Caco-2 (cell line): ENCODE measurements at regions of chr19 and their contacts with region 1.

Region 1: GRCh38 chr19:8526345-8527067 is 12.5 kb upstream of the ZNF414 start:
- DNase-seq: peak; percentile 94
- H3K4me3 ChIP-seq: peak overlapping the region; percentile 86
- H3K4me3 Mint-ChIP-seq: no peak overlapping the region
- H3K27ac Mint-ChIP-seq: no peak overlapping the region
- H3K4me1 ChIP-seq: peaks cover 2% of the 10 kb centered on the region; the same call in 1 of the 2 replicates
- H3K4me1 Mint-ChIP-seq: peaks cover 7% of the 10 kb centered on the region
- H3K27me3 ChIP-seq: no peaks in the 10 kb centered on the region
- H3K27me3 Mint-ChIP-seq: no peaks in the 10 kb centered on the region
- CTCF ChIP-seq: no peak

Region 2: DNA sequence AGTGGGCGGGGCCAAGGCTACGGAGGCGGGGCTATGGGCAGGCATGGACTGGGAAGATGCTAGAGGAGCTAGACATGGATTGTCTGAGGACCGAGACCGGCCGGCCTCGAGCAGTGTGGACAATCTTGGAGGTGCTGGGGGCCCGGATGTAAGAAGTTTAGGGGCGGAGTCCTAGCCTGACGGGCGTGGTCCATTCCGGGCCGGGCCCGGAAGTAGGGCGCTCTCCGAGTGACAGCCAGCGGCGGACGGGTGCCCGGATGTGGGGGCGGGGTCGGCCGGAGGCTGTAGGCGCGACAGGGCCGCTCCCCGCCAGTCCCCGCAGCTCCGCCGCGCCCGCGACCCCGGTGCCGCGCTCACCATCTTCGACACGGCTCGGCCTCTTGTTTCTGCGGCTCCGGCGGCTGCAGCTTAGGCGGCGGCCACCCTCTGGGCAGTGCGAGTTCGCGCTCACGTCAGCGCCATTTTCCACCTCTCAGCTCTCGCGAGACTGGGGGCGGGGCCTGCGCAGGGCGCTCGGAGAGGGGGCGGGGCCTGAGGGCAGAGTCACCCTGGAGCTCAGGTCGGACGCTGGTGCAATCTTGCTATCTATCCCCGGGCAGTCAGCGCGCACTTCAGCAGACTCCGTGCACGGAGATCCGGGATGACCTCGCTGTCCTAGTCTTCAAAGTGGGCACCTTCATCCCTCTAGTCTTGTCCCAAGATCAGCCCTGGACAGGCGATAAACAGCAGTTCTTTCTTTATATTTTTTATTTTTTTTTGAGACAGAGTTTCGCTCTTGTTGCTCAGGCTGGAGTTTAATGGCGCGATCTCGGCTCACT is 12.6 kb before region 1 on chr19 and contains the start of gene ZNF414:
- CTCF ChIA-PET with region 1: interaction called, 14 read pairs
- POLR2A ChIA-PET with region 1: interaction called, 55 read pairs
- intact Hi-C with region 1: loop called (anchors 1 kb)
- DNase-seq: peak; percentile 96 to 98
- H3K4me3 ChIP-seq: peak within 1 kb of the TSS; percentile 86
- H3K4me3 Mint-ChIP-seq: peak within 1 kb of the TSS; percentile 76
- H3K27ac Mint-ChIP-seq: peak within 1 kb of the TSS; percentile 91
- H3K4me1 ChIP-seq: peaks cover 12% of the 10 kb centered on the region; the same call in 1 of the 2 replicates
- H3K4me1 Mint-ChIP-seq: no peaks in the 10 kb centered on the region
- H3K27me3 ChIP-seq: no peaks in the 10 kb centered on the region
- H3K27me3 Mint-ChIP-seq: no peaks in the 10 kb centered on the region
- CTCF ChIP-seq: no peak
- total RNA-seq, gene ZNF414: 17.2 and 25.0 TPM in 2 replicates

Region 3: GRCh38 chr19:8580710-8581281 is 54.3 kb after region 1 on chr19:
- CTCF ChIA-PET with region 1: interaction called, 10 read pairs
- POLR2A ChIA-PET with region 1: no interaction called
- intact Hi-C with region 1: no loop called
- DNase-seq: peak; percentile 76 to 84
- H3K4me3 ChIP-seq: no peak overlapping the region
- H3K4me3 Mint-ChIP-seq: no peak overlapping the region
- H3K27ac Mint-ChIP-seq: no peak overlapping the region
- H3K4me1 ChIP-seq: no peaks in the 10 kb centered on the region
- H3K4me1 Mint-ChIP-seq: peaks cover 6% of the 10 kb centered on the region
- H3K27me3 ChIP-seq: no peaks in the 10 kb centered on the region
- H3K27me3 Mint-ChIP-seq: peaks cover 9% of the 10 kb centered on the region
- CTCF ChIP-seq: peak; percentile 98

Region 4: GRCh38 chr19:8609279-8610040 is 83.0 kb after region 1 on chr19:
- CTCF ChIA-PET with region 1: no interaction called
- POLR2A ChIA-PET with region 1: no interaction called
- intact Hi-C with region 1: no loop called
- DNase-seq: no peak
- H3K4me3 ChIP-seq: no peak overlapping the region
- H3K4me3 Mint-ChIP-seq: peak overlapping the region; percentile 60
- H3K27ac Mint-ChIP-seq: peak overlapping the region; percentile 47
- H3K4me1 ChIP-seq: no peaks in the 10 kb centered on the region
- H3K4me1 Mint-ChIP-seq: no peaks in the 10 kb centered on the region
- H3K27me3 ChIP-seq: no peaks in the 10 kb centered on the region
- H3K27me3 Mint-ChIP-seq: no peaks in the 10 kb centered on the region
- CTCF ChIP-seq: no peak

Region 5: DNA sequence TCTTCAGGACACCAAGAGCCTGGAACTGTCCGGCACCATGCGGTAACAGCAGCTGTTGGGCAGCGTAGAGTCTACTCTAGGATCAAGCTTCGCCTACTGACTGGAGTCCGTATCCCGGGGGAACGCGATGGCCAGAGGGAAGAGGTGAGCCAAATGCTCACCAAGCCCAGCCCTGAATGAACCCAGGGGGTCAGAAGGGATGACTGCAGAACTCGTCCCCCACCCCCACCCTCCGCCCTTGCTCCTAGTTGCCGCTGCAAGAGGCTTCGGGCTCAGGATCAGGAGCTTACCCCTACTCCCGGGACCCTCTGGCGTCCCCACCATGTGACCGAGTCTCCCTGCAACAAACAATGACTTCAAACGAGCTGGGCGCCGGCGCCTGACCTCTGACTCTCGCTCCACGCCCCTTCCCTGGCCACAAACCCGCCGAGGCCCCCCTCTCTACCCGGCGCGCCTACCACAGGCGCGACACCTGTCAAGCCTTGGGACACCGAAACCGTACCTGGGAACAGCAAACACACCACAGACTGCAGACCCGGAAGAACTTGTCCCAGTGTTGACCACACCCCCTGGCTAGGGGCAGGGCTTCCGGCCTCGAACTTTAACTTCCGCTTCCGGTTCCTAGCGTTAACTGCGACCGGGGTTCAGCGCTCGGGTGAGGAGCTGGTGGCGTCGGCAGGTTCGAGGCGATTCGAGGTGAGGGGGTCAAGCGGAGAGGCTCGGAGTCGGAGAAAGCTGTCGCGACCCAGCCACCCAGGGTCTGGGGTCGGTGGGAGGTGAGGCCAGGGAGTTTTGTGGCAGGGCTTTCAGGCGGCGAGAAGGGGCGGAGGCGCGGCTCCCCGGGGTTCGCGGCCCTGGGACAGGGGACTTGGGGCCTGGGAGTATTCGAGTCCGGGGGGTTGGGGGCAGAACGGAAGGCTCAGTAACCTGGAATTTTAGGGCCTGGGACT is 1301.1 kb after region 1 on chr19 and contains the start of gene UBL5:
- CTCF ChIA-PET with region 1: no interaction called
- POLR2A ChIA-PET with region 1: no interaction called
- intact Hi-C with region 1: loop called (anchors 5 kb)
- DNase-seq: peak; percentile 93 to 94
- H3K4me3 ChIP-seq: peak within 1 kb of the TSS; percentile 58
- H3K4me3 Mint-ChIP-seq: peak within 1 kb of the TSS; percentile 86
- H3K27ac Mint-ChIP-seq: peak within 1 kb of the TSS; percentile 91
- H3K4me1 ChIP-seq: 0 out of 2 replicates have a peak, but pooled peaks cover 7% of the 10 kb centered on the region
- H3K4me1 Mint-ChIP-seq: peaks cover 7% of the 10 kb centered on the region
- H3K27me3 ChIP-seq: no peaks in the 10 kb centered on the region
- H3K27me3 Mint-ChIP-seq: no peaks in the 10 kb centered on the region
- CTCF ChIP-seq: no peak
- total RNA-seq, gene UBL5: 345 and 359 TPM in 2 replicates

Region 6: DNA sequence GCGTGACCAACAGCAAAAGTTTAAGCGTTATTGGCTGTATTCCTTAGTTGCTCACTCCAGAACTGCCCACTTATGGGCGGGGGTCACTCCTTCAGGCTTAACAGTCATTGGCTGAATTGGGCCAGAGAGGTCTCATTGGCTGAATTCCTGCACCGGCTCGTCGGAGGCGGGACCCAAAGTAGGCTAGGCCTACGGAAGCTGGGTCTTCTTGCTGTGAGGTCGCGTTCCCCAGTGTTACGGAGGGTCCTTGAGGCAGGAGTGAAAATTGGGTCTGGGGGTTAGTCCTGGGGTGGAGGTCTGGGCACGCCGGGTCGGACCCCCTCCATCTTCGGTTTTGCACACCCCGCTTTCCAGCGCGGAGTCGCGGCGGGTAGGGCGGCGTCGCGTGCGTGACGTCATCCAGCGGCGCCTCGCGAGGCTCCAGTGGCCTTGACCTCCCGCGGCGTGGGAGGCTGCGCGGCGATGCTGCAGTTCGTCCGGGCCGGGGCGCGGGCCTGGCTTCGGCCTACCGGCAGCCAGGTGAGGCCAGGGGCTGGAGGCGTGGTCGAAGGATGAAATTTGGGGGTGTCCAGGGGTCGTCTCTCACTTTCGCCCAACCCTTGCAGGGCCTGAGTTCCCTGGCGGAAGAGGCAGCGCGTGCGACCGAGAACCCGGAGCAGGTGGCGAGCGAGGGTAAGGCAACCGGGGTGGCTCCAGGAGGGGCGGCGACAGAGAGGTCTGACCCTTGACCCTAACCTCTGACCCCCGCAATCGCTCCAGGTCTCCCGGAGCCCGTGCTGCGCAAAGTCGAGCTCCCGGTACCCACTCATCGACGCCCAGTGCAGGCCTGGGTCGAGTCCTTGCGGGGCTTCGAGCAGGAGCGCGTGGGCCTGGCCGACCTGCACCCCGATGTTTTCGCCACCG is 1725.5 kb after region 1 on chr19 and contains the start of gene MRPL4:
- CTCF ChIA-PET with region 1: no interaction called
- POLR2A ChIA-PET with region 1: no interaction called
- intact Hi-C with region 1: no loop called
- DNase-seq: peak; percentile 95 to 97
- H3K4me3 ChIP-seq: peak within 1 kb of the TSS; percentile 93
- H3K4me3 Mint-ChIP-seq: peak within 1 kb of the TSS; percentile 93
- H3K27ac Mint-ChIP-seq: peak within 1 kb of the TSS; percentile 94
- H3K4me1 ChIP-seq: peaks cover 4% of the 10 kb centered on the region; the same call in 1 of the 2 replicates
- H3K4me1 Mint-ChIP-seq: no peaks in the 10 kb centered on the region
- H3K27me3 ChIP-seq: no peaks in the 10 kb centered on the region
- H3K27me3 Mint-ChIP-seq: no peaks in the 10 kb centered on the region
- CTCF ChIP-seq: no peak
- total RNA-seq, gene MRPL4: 85.9 and 87.4 TPM in 2 replicates